ENCODE measurements at regions of chrX and their contacts with region 1.

Region 1: DNA sequence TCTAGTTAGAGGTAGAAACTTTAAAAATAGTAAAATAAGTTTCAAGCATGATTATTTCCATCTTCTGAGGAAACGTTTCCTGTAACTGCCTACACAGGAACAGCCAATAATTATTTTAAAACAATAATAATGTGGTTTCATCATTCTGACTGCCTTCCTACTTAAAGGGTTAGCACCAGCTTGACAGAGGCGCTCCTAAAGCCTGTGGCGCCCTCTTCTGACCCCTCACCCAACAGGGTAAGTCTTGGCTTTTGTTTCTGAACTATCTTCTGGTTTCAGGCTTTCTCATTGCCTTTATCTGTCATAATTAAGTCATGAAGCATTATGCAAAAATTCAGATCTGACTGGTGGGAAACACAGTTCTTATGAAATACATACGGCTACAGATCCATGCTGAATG is 96.7 kb downstream of the ITM2A start:
- DNase-seq: peak; percentile 87
- H3K4me3 Mint-ChIP-seq: peak overlapping the region; percentile 26
- H3K27ac Mint-ChIP-seq: peak overlapping the region; percentile 85
- H3K4me1 Mint-ChIP-seq: peaks cover 45% of the 10 kb centered on the region
- H3K27me3 Mint-ChIP-seq: no peaks in the 10 kb centered on the region

Region 2: GRCh38 chrX:78555401-78555980 is 714.9 kb before region 1 on chrX:
- CTCF ChIA-PET with region 1: interaction called, 5 read pairs
- POLR2A ChIA-PET with region 1: no interaction called
- intact Hi-C with region 1: loop called (anchors 2 kb)
- DNase-seq: no peak
- H3K4me3 Mint-ChIP-seq: no peak overlapping the region
- H3K27ac Mint-ChIP-seq: no peak overlapping the region
- H3K4me1 Mint-ChIP-seq: peaks cover 5% of the 10 kb centered on the region
- H3K27me3 Mint-ChIP-seq: no peaks in the 10 kb centered on the region

Region 3: GRCh38 chrX:79182616-79183015 is 87.8 kb before region 1 on chrX:
- CTCF ChIA-PET with region 1: interaction called, 4 read pairs
- POLR2A ChIA-PET with region 1: no interaction called
- intact Hi-C with region 1: loop called (anchors 1 kb)
- DNase-seq: peak; percentile 19
- H3K4me3 Mint-ChIP-seq: peak overlapping the region; percentile 61
- H3K27ac Mint-ChIP-seq: peak overlapping the region; percentile 91
- H3K4me1 Mint-ChIP-seq: peaks cover 66% of the 10 kb centered on the region
- H3K27me3 Mint-ChIP-seq: no peaks in the 10 kb centered on the region

Region 4: DNA sequence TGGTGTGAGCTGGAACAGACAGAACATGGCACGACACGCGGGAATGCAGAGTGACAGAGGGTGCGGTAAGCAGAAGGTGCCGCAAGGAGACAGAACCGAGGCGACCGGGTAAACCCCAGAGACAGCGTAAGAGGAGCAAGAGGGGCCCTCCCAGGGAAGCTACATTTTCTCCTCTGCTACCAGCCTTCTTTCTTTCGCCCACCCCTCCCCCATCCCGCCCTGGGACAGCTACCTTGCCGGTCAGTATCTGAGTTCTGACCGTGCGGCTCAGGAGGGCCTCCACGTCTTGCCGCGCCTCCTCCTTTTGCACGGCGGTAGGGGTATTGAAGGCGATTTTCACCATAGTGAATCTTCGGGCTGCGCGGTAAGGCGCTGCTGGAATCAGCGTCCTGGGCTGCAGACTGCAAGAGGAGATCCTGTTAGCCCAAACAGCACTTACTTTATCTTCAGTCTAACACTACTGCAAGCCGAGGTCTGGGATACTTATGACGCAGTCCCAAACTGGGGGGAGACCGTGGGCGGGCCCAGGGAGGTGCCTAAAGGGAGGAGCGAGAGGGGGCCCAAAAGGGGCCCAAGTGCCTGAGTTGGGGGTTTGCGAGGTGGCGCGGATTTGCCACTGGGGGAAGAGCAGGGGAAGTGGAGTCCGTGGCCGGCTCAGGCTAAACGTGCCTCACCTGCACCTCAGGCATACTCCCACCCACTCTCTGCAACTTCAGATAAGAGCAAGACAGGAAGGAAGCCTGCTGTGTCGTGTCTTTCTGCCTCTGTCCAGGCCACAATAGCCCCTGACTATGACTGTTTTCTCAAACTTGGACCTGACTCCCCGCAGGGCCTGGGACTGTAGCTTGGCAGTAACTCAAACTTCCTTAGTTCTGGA is 96.7 kb after region 1 on chrX and contains the start of gene ITM2A:
- CTCF ChIA-PET with region 1: no interaction called
- POLR2A ChIA-PET with region 1: interaction called, 3 read pairs
- intact Hi-C with region 1: loop called (anchors 2 kb)
- DNase-seq: peak; percentile 75
- H3K4me3 Mint-ChIP-seq: peak within 1 kb of the TSS; percentile 95
- H3K27ac Mint-ChIP-seq: peak within 1 kb of the TSS; percentile 95
- H3K4me1 Mint-ChIP-seq: peaks cover 24% of the 10 kb centered on the region
- H3K27me3 Mint-ChIP-seq: no peaks in the 10 kb centered on the region
- total RNA-seq, gene ITM2A: 87.7 to 98.1 TPM

Measured in activated CD4-positive, alpha-beta memory T cell treated with anti-CD3 and anti-CD28 coated beads for 36 hours (primary cell).